ENCODE measurements at regions of chr16 and their contacts with region 1.

Region 1: DNA sequence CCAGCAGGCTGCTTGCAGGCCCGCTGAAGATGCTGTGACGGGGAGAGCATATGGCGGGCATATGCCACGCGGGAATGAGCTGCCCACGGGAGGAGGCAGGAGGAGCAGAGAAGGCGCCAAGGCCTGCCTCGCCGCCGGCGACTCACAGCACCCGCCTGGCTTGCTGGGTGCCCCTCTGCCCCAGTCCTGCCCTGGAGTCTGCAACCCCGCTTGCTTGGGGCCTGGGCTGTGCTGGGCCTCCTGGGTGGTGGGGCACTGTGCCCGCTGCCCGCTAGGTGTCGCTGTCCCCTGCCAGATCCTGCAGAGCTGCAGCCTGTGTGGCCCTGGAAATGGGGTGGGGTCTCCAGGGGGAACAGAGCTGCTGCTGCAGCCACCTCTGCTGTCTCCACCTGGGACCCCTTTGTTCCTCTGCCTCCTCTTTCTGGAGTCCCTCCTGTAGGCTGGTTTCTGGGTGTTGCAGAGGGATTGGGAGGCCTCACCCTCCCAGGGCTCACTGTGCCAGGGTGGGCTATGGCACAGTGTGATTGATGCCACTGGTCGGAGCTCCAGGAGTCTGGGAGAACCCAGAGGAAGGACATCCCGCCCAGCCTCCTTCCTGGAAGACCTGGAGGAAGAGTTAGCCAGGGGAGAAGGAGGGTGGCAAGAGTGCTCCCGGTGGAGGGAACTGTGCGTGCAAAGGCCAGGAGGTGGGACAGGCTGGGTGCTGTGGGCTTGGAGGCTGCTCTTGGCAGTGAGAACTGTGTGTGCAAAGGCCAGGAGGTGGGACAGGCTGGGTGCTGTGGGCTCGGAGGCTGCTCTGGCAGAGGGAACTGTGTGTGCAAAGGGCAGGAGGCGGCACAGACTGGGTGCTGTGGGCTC is 141.0 kb upstream of the CIBAR2 start:
- DNase-seq: peak; percentile 93
- H3K4me3 ChIP-seq: no peak overlapping the region; a peak in 1 of 4 replicates
- H3K27ac ChIP-seq: peak overlapping the region in 1 of 2 experiments; percentile 60; a peak in 2 of 4 replicates
- H3K4me1 ChIP-seq: peaks cover 0 to 55% of the 10 kb centered on the region in 2 experiments; a peak in 1 of 4 replicates
- H3K27me3 ChIP-seq: no peaks in the 10 kb centered on the region
- CTCF ChIP-seq: peak; percentile 94
- EP300 ChIP-seq: no peak
- RAD21 ChIP-seq: peak; percentile 77

Region 2: GRCh38 chr16:84024854-84025253 is 1228.5 kb before region 1 on chr16:
- CTCF ChIA-PET with region 1: no interaction called
- POLR2A ChIA-PET with region 1: no interaction called
- DNase-seq: no peak
- H3K4me3 ChIP-seq: no peak overlapping the region
- H3K27ac ChIP-seq: 0 out of 4 replicates have a peak overlapping the region, but pooled peaks of 1 of the 2 experiments have one; percentile 23
- H3K4me1 ChIP-seq: no peaks in the 10 kb centered on the region
- H3K27me3 ChIP-seq: no peaks in the 10 kb centered on the region
- CTCF ChIP-seq: no peak
- EP300 ChIP-seq: no peak
- RAD21 ChIP-seq: no peak

Region 3: GRCh38 chr16:85172455-85173145 is 80.7 kb before region 1 on chr16:
- CTCF ChIA-PET with region 1: interaction called, 46 read pairs
- POLR2A ChIA-PET with region 1: no interaction called
- DNase-seq: peak; percentile 83
- H3K4me3 ChIP-seq: peak overlapping the region; percentile 52 to 65
- H3K27ac ChIP-seq: peak overlapping the region; percentile 88 to 97
- H3K4me1 ChIP-seq: peaks cover 26 to 73% of the 10 kb centered on the region in 2 experiments
- H3K27me3 ChIP-seq: no peaks in the 10 kb centered on the region
- CTCF ChIP-seq: peak; percentile 53
- EP300 ChIP-seq: no peak
- RAD21 ChIP-seq: peak; percentile 44

Region 4: GRCh38 chr16:85210423-85211169 is 42.7 kb before region 1 on chr16:
- CTCF ChIA-PET with region 1: interaction called, 10 read pairs
- POLR2A ChIA-PET with region 1: no interaction called
- DNase-seq: no peak
- H3K4me3 ChIP-seq: no peak overlapping the region
- H3K27ac ChIP-seq: peak overlapping the region in 1 of 2 experiments; percentile 26; a peak in 2 of 4 replicates
- H3K4me1 ChIP-seq: peaks cover 27 to 63% of the 10 kb centered on the region in 2 experiments; a peak in 3 of 4 replicates
- H3K27me3 ChIP-seq: no peaks in the 10 kb centered on the region
- CTCF ChIP-seq: no peak
- EP300 ChIP-seq: no peak
- RAD21 ChIP-seq: no peak

Region 5: GRCh38 chr16:85286970-85287824 is 33.9 kb after region 1 on chr16:
- CTCF ChIA-PET with region 1: interaction called, 31 read pairs
- POLR2A ChIA-PET with region 1: interaction called, 3 read pairs
- DNase-seq: peak; percentile 93
- H3K4me3 ChIP-seq: no peak overlapping the region
- H3K27ac ChIP-seq: peak overlapping the region; percentile 22 to 92; a peak in 3 of 4 replicates
- H3K4me1 ChIP-seq: peaks cover 10 to 71% of the 10 kb centered on the region in 2 experiments; a peak in 3 of 4 replicates
- H3K27me3 ChIP-seq: no peaks in the 10 kb centered on the region
- CTCF ChIP-seq: no peak
- EP300 ChIP-seq: peak in 1 of 2 experiments; percentile 81; a peak in 2 of 4 replicates
- RAD21 ChIP-seq: peak; percentile 36

Region 6: DNA sequence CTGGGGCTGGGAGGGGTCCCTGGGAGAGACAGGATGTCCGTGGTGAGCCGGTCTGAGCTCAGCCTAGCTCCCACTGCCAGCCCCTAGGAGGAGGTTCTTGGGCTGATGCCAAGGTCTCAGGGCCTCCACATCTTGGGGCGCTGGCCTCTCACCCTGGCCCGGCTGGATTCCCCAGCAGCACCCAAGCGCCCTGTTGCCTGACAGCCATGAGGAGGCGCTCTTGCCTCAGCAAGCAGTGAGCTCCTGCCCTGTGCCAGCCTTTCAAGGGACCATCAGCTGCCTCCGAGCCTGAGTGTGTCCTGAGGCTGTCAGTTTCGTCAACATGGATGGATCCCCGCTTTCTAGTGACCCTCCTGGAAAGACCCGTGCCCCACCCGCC is 93.9 kb after region 1 on chr16:
- CTCF ChIA-PET with region 1: interaction called, 30 read pairs
- POLR2A ChIA-PET with region 1: no interaction called
- DNase-seq: peak; percentile 63
- H3K4me3 ChIP-seq: no peak overlapping the region
- H3K27ac ChIP-seq: peak overlapping the region in 1 of 2 experiments; percentile 97; a peak in 1 of 4 replicates
- H3K4me1 ChIP-seq: peaks cover 13 to 60% of the 10 kb centered on the region in 2 experiments; a peak in 2 of 4 replicates
- H3K27me3 ChIP-seq: no peaks in the 10 kb centered on the region
- CTCF ChIP-seq: peak; percentile 45
- EP300 ChIP-seq: no peak
- RAD21 ChIP-seq: peak; percentile 73

Region 7: GRCh38 chr16:85524630-85525419 is 271.5 kb after region 1 on chr16:
- CTCF ChIA-PET with region 1: no interaction called
- POLR2A ChIA-PET with region 1: no interaction called
- DNase-seq: peak; percentile 71
- H3K4me3 ChIP-seq: no peak overlapping the region
- H3K27ac ChIP-seq: peak overlapping the region in 1 of 2 experiments; percentile 11; a peak in 1 of 4 replicates
- H3K4me1 ChIP-seq: peaks cover 0 to 50% of the 10 kb centered on the region in 2 experiments; a peak in 2 of 4 replicates
- H3K27me3 ChIP-seq: no peaks in the 10 kb centered on the region
- CTCF ChIP-seq: no peak
- EP300 ChIP-seq: no peak
- RAD21 ChIP-seq: no peak

Measured in SK-N-SH (cell line).